ENCODE measurements at regions of chr3 and their contacts with region 1.

Region 1: DNA sequence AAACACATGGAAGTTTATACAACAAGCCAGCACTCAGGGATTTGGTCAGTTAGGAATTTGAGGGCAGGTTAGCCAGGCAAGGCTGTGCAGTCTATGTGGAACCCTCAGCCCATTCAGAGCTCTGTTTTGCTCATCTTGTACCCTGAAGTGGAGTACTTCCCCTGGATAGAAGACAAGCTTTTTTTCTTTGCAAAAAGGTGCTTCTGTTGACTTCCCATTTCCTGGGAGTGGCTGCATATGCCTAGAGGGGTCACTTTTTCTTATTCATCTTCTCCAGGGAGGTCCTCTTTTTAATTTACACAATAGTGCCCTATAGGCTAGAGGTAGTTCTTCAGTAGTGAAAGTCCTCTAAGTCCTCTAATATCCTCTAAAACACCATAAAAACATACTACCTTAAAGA is 225.0 kb upstream of the P2RY1 start:
- DNase-seq: no peak
- ATAC-seq: no peak
- H3K4me3 Mint-ChIP-seq: no peak overlapping the region
- H3K27ac Mint-ChIP-seq: no peak overlapping the region
- H3K4me1 Mint-ChIP-seq: no peaks in the 10 kb centered on the region
- H3K27me3 Mint-ChIP-seq: no peaks in the 10 kb centered on the region
- CTCF ChIP-seq: no peak

Region 2: GRCh38 chr3:152595975-152596790 is 13.7 kb before region 1 on chr3:
- CTCF ChIA-PET with region 1: no interaction called
- POLR2A ChIA-PET with region 1: interaction called, 12 read pairs
- intact Hi-C with region 1: no loop called
- DNase-seq: no peak
- ATAC-seq: peak; percentile 96
- H3K4me3 Mint-ChIP-seq: peak overlapping the region; percentile 79
- H3K27ac Mint-ChIP-seq: peak overlapping the region; percentile 98
- H3K4me1 Mint-ChIP-seq: peaks cover 29% of the 10 kb centered on the region
- H3K27me3 Mint-ChIP-seq: no peaks in the 10 kb centered on the region
- CTCF ChIP-seq: no peak

Region 3: GRCh38 chr3:153080778-153081240 is 470.9 kb after region 1 on chr3:
- CTCF ChIA-PET with region 1: no interaction called
- POLR2A ChIA-PET with region 1: no interaction called
- intact Hi-C with region 1: no loop called
- DNase-seq: no peak
- ATAC-seq: no peak
- H3K4me3 Mint-ChIP-seq: no peak overlapping the region
- H3K27ac Mint-ChIP-seq: no peak overlapping the region
- H3K4me1 Mint-ChIP-seq: no peaks in the 10 kb centered on the region
- H3K27me3 Mint-ChIP-seq: peaks cover 13% of the 10 kb centered on the region
- CTCF ChIP-seq: no peak

Measured in activated B cell treated with CpG ODN at 0.5 μM for 24 hours (primary cell).